ENCODE measurements at regions of chr14 and their contacts with region 1.

Region 1: DNA sequence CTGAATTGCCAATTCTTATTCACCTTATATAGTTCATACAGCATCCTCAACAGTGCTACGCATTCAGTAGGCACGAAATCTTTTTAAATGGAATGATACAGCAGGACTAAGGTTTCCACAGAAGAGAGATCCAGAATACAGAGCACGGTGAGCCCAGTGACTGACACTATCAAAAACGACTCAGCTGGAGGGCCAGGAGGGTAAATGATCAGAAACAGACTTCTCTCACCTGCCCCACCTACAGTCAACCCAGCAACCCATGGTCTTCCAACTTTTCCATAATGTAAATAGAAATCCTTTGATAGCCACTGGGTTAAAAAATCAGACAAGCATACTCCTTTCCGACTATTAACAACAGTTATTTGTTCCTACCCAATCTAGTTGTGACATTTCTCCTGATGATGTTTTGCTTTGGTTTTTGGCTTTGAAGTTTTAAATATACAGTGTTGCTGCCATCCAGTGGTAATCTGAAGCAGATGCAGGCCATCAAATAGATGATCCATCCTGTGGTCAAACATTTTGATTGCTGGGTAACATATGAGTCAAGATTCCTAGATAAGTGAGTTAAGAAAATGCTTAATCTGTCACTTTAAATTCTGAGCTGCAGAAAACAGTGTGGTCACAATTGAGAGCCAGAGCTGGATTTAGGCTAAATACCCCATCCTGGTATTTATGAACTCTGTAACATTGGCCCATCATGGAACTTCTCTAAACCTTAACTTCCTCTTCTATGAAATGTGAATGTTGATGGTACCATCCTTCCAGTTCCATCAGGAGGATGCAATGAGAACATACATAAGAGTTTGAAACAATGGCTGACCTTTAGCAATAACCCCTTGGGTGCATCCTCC is 42.0 kb downstream of the GPHB5 start:
- DNase-seq: no peak
- H3K4me3 ChIP-seq: no peak overlapping the region
- H3K27ac ChIP-seq: no peak overlapping the region
- H3K4me1 ChIP-seq: no peaks in the 10 kb centered on the region
- H3K27me3 ChIP-seq: no peaks in the 10 kb centered on the region
- CTCF ChIP-seq: peak in 2 of 3 experiments; percentile 51 to 74; a peak in 2 of 4 replicates
- EP300 ChIP-seq: no peak
- POLR2A ChIP-seq: no peak
- RAD21 ChIP-seq: peak; percentile 89 to 90

Region 2: GRCh38 chr14:62162998-62163589 is 1113.6 kb before region 1 on chr14:
- CTCF ChIA-PET with region 1: interaction called, 19 read pairs
- POLR2A ChIA-PET with region 1: no interaction called
- DNase-seq: peak in 1 of 2 experiments; percentile 19
- H3K4me3 ChIP-seq: no peak overlapping the region
- H3K27ac ChIP-seq: no peak overlapping the region
- H3K4me1 ChIP-seq: no peaks in the 10 kb centered on the region; a peak in 1 of 7 replicates
- H3K27me3 ChIP-seq: no peaks in the 10 kb centered on the region
- CTCF ChIP-seq: peak in 2 of 3 experiments; percentile 74 to 92; a peak in 3 of 4 replicates
- EP300 ChIP-seq: no peak
- POLR2A ChIP-seq: no peak
- RAD21 ChIP-seq: peak; percentile 94 to 96

Region 3: DNA sequence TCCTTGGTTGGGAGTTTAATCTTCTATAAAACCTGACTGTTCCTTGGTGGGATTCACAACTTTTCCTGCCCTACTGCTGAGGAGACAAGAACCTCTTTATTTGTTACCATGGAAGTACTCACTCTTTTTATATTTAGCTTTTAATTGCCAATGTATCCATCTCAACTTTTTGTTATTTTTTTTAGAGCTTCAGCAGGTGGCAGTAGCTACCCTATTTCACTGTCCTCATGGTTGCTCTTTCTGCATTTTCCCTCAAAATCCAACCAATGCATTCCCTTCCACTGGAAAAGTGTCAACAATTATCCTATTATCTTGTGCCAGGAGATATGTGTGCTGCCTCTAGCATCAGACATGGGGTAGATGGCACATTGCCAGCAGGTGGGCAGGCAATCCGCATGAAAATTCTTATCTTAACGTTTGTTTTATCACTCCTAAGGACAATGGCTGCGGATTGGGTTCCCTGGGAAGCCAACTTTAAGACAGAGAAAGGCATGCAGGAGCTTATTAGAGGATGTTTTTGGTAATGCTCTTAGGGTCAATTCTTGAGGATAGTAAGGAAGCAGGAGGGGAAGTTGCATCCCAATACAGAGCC is 1108.1 kb before region 1 on chr14:
- CTCF ChIA-PET with region 1: interaction called, 19 read pairs
- POLR2A ChIA-PET with region 1: no interaction called
- DNase-seq: no peak
- H3K4me3 ChIP-seq: no peak overlapping the region
- H3K27ac ChIP-seq: no peak overlapping the region
- H3K4me1 ChIP-seq: no peaks in the 10 kb centered on the region
- H3K27me3 ChIP-seq: peaks cover 0 to 1% (median 0%) of the 10 kb centered on the region in 4 experiments; a peak in 1 of 7 replicates
- CTCF ChIP-seq: peak in 1 of 3 experiments; percentile 22; a peak in 1 of 4 replicates
- EP300 ChIP-seq: no peak
- POLR2A ChIP-seq: no peak
- RAD21 ChIP-seq: peak; percentile 64 to 65

Region 4: GRCh38 chr14:62179367-62180018 is 1097.2 kb before region 1 on chr14:
- CTCF ChIA-PET with region 1: interaction called, 10 read pairs
- POLR2A ChIA-PET with region 1: no interaction called
- DNase-seq: peak; percentile 29 to 60
- H3K4me3 ChIP-seq: no peak overlapping the region
- H3K27ac ChIP-seq: no peak overlapping the region
- H3K4me1 ChIP-seq: no peaks in the 10 kb centered on the region
- H3K27me3 ChIP-seq: no peaks in the 10 kb centered on the region; a peak in 1 of 7 replicates
- CTCF ChIP-seq: peak; percentile 9 to 87 (median 77)
- EP300 ChIP-seq: no peak
- POLR2A ChIP-seq: no peak
- RAD21 ChIP-seq: peak; percentile 97 to 99

Region 5: GRCh38 chr14:63174760-63175211 is 101.9 kb before region 1 on chr14:
- CTCF ChIA-PET with region 1: interaction called, 70 read pairs
- POLR2A ChIA-PET with region 1: no interaction called
- DNase-seq: peak in 1 of 2 experiments; percentile 21
- H3K4me3 ChIP-seq: no peak overlapping the region
- H3K27ac ChIP-seq: no peak overlapping the region
- H3K4me1 ChIP-seq: peaks cover 0 to 4% (median 3%) of the 10 kb centered on the region in 4 experiments; a peak in 5 of 7 replicates
- H3K27me3 ChIP-seq: no peaks in the 10 kb centered on the region
- CTCF ChIP-seq: peak in 2 of 3 experiments; percentile 59 to 72; a peak in 3 of 4 replicates
- EP300 ChIP-seq: no peak
- POLR2A ChIP-seq: no peak
- RAD21 ChIP-seq: peak; percentile 81 to 85

Region 6: DNA sequence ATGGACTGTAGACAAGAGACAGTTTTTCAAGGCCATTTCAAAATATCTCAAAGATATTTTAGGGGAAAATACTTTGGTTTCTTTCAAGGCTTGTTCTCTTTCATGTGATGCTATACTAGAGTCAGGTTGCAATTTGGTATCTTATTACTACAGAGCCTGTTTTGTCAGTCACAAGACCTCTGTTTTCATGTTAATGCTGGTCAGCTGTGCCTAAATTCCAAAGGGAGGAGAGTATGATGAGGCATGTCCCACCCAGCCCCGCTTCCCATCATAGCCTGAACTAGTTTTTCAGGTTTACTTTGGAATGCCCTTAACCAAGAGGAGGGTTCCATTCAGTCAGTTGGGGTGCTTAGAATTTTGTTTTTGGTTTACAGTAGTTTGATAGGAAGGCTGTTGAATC is 10.6 kb before region 1 on chr14:
- CTCF ChIA-PET with region 1: interaction called, 18 read pairs
- POLR2A ChIA-PET with region 1: no interaction called
- DNase-seq: peak in 1 of 2 experiments; percentile 10
- H3K4me3 ChIP-seq: peak overlapping the region in 1 of 4 experiments; percentile 5; a peak in 1 of 8 replicates
- H3K27ac ChIP-seq: no peak overlapping the region
- H3K4me1 ChIP-seq: no peaks in the 10 kb centered on the region
- H3K27me3 ChIP-seq: no peaks in the 10 kb centered on the region
- CTCF ChIP-seq: no peak
- EP300 ChIP-seq: no peak
- POLR2A ChIP-seq: no peak
- RAD21 ChIP-seq: no peak

Region 7: GRCh38 chr14:63432228-63432627 is 155.5 kb after region 1 on chr14:
- CTCF ChIA-PET with region 1: no interaction called
- POLR2A ChIA-PET with region 1: no interaction called
- DNase-seq: no peak
- H3K4me3 ChIP-seq: no peak overlapping the region
- H3K27ac ChIP-seq: no peak overlapping the region
- H3K4me1 ChIP-seq: peaks cover 0 to 12% (median 7%) of the 10 kb centered on the region in 4 experiments; a peak in 5 of 7 replicates
- H3K27me3 ChIP-seq: no peaks in the 10 kb centered on the region
- CTCF ChIP-seq: no peak
- EP300 ChIP-seq: no peak
- POLR2A ChIP-seq: no peak
- RAD21 ChIP-seq: no peak